Activated T-helper 2 cell treated with anti-CD3 and anti-CD28 coated beads, Interferon-gamma antibody, Interleukin-2, Interleukin-4, amounts not matched to agents 10 μg/mL and 5 μg/mL and 100 μg/mL, durations not matched to agents 14 hours and 24 hours and 36 hours (primary cell): ENCODE measurements at regions of chr1 and their contacts with region 1.

Region 1: GRCh38 chr1:9629445-9630201 is 21.9 kb upstream of the PIK3CD start:
- DNase-seq: peak; percentile 76
- H3K4me3 Mint-ChIP-seq: peak overlapping the region; percentile 96
- H3K27ac Mint-ChIP-seq: peak overlapping the region; percentile 96
- H3K4me1 Mint-ChIP-seq: peaks cover 51% of the 10 kb centered on the region
- H3K27me3 Mint-ChIP-seq: no peaks in the 10 kb centered on the region

Region 2: DNA sequence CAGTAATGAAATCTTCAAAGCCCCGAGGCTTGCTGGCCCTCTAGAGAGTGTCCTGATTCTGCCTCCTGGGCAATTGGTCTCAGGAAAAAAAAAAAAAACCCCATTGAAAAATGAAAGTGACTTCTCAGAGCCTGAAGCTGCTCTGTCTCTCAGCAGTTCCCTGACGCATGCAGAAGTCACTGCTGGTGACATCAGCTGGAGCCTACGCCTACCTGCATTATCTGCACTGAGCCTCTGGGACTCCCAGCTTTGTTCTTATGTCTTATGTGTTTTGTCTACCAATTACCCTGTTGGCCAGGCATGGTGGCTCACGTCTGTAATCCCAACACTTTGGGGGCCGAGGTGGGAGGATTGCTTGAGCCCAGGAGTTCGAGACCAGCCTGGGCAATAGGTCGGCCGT is 100.4 kb before region 1 on chr1:
- intact Hi-C with region 1: no loop called
- DNase-seq: no peak
- H3K4me3 Mint-ChIP-seq: no peak overlapping the region
- H3K27ac Mint-ChIP-seq: no peak overlapping the region
- H3K4me1 Mint-ChIP-seq: no peaks in the 10 kb centered on the region
- H3K27me3 Mint-ChIP-seq: no peaks in the 10 kb centered on the region

Region 3: GRCh38 chr1:9671377-9672140 is 41.9 kb after region 1 on chr1:
- intact Hi-C with region 1: loop called (anchors 5 kb)
- DNase-seq: no peak
- H3K4me3 Mint-ChIP-seq: no peak overlapping the region
- H3K27ac Mint-ChIP-seq: peak overlapping the region; percentile 59
- H3K4me1 Mint-ChIP-seq: peaks cover 34% of the 10 kb centered on the region
- H3K27me3 Mint-ChIP-seq: no peaks in the 10 kb centered on the region

Region 4: GRCh38 chr1:9717193-9718005 is 87.8 kb after region 1 on chr1:
- intact Hi-C with region 1: loop called (anchors 1 kb)
- DNase-seq: peak; percentile 87
- H3K4me3 Mint-ChIP-seq: peak overlapping the region; percentile 82
- H3K27ac Mint-ChIP-seq: peak overlapping the region; percentile 87
- H3K4me1 Mint-ChIP-seq: peaks cover 38% of the 10 kb centered on the region
- H3K27me3 Mint-ChIP-seq: no peaks in the 10 kb centered on the region

Region 5: DNA sequence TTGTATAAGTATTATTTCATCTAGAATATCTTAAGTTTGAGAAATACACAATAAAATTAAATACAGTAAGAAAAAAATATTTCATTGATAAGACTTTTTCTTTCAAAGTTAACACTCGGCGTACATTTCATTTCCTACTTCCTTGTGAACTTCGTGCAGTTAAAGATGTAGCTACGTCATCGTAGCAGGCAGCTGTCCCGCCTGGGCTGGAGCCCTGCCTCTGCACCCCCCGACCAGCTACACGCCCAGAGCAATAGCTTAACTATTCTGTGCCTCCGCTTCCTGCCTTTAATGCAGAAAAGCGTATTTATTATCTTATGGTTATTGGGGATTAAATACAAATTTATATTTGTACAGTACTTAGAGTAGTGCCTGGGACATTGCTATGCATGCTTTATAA is 140.7 kb after region 1 on chr1:
- intact Hi-C with region 1: no loop called
- DNase-seq: no peak
- H3K4me3 Mint-ChIP-seq: no peak overlapping the region
- H3K27ac Mint-ChIP-seq: no peak overlapping the region
- H3K4me1 Mint-ChIP-seq: peaks cover 3% of the 10 kb centered on the region
- H3K27me3 Mint-ChIP-seq: no peaks in the 10 kb centered on the region

Region 6: DNA sequence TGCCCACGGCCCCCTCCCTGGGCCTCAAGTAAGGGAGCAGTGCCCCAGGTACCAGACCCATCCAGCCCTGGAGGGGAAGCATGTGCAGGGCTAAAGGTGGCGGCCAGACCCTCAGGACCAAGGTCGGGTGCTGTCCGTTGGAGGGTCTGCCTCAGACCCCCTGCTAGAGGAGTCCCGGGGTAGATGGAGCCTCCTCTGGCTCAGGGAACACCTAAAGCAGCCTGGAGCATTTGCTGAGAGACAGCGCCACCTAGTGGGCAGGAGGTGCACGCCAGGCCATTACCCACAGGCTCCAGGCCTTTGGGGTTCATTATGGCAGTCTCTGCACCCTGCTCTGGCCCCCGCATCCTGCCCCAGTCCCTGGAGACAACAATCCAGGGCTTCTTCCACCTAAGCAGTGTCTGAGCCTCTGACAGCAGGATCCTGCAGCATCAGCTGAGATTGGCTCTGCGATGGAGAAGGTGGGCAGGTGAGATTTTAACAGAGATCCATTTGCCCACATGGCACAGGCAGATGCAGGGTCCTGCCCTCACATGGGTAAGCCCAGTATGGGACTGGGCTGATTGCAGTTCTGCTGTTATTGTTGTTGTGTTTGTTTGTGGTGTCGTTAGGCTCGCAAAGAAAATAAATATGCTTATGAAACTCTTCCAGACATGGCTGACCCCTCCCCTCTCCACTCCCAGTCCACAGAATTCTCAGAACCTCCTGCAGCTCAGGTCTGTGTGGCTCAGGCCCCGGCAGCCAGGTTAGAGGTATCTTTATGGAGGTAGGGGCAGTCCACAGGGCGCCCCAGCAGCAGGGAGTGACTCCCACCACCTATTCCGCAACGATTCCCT is 238.0 kb after region 1 on chr1:
- intact Hi-C with region 1: loop called (anchors 5 kb)
- DNase-seq: peak; percentile 77
- H3K4me3 Mint-ChIP-seq: no peak overlapping the region
- H3K27ac Mint-ChIP-seq: no peak overlapping the region
- H3K4me1 Mint-ChIP-seq: peaks cover 4% of the 10 kb centered on the region
- H3K27me3 Mint-ChIP-seq: no peaks in the 10 kb centered on the region